Activated naive CD4-positive, alpha-beta T cell treated with anti-CD3 and anti-CD28 coated beads for 36 hours (primary cell): ENCODE measurements at regions of chr3 and their contacts with region 1.

Region 1: GRCh38 chr3:122646146-122646988 is 34.3 kb upstream of the PARP14 start:
- DNase-seq: peak; percentile 28
- H3K4me3 Mint-ChIP-seq: peak overlapping the region; percentile 28
- H3K27ac Mint-ChIP-seq: peak overlapping the region; percentile 82
- H3K4me1 Mint-ChIP-seq: peaks cover 31% of the 10 kb centered on the region
- H3K27me3 Mint-ChIP-seq: peaks cover 2% of the 10 kb centered on the region

Region 2: GRCh38 chr3:122497425-122497824 is 148.9 kb before region 1 on chr3:
- CTCF ChIA-PET with region 1: no interaction called
- intact Hi-C with region 1: no loop called
- DNase-seq: peak; percentile 65
- H3K4me3 Mint-ChIP-seq: no peak overlapping the region
- H3K27ac Mint-ChIP-seq: no peak overlapping the region
- H3K4me1 Mint-ChIP-seq: peaks cover 45% of the 10 kb centered on the region
- H3K27me3 Mint-ChIP-seq: no peaks in the 10 kb centered on the region

Region 3: GRCh38 chr3:122668930-122669730 is 22.8 kb after region 1 on chr3:
- CTCF ChIA-PET with region 1: interaction called, 3 read pairs
- intact Hi-C with region 1: loop called (anchors 1 kb)
- DNase-seq: peak; percentile 56
- H3K4me3 Mint-ChIP-seq: no peak overlapping the region
- H3K27ac Mint-ChIP-seq: no peak overlapping the region
- H3K4me1 Mint-ChIP-seq: peaks cover 15% of the 10 kb centered on the region
- H3K27me3 Mint-ChIP-seq: peaks cover 3% of the 10 kb centered on the region